ENCODE measurements at regions of chr10 and their contacts with region 1.

Region 1: GRCh38 chr10:3477683-3478082 is 305.1 kb upstream of the PITRM1 start:
- DNase-seq: no peak
- H3K4me3 Mint-ChIP-seq: no peak overlapping the region
- H3K27ac Mint-ChIP-seq: peak overlapping the region; percentile 72
- H3K4me1 Mint-ChIP-seq: peaks cover 26% of the 10 kb centered on the region
- H3K27me3 Mint-ChIP-seq: peaks cover 31% of the 10 kb centered on the region

Region 2: GRCh38 chr10:3424110-3424851 is 53.4 kb before region 1 on chr10:
- intact Hi-C with region 1: loop called (anchors 5 kb)
- DNase-seq: no peak
- H3K4me3 Mint-ChIP-seq: no peak overlapping the region
- H3K27ac Mint-ChIP-seq: no peak overlapping the region
- H3K4me1 Mint-ChIP-seq: peaks cover 46% of the 10 kb centered on the region
- H3K27me3 Mint-ChIP-seq: peaks cover 11% of the 10 kb centered on the region

Region 3: GRCh38 chr10:3467052-3467951 is 10.4 kb before region 1 on chr10:
- intact Hi-C with region 1: loop called (anchors 1 kb)
- DNase-seq: peak; percentile 79
- H3K4me3 Mint-ChIP-seq: peak overlapping the region; percentile 82
- H3K27ac Mint-ChIP-seq: peak overlapping the region; percentile 96
- H3K4me1 Mint-ChIP-seq: peaks cover 51% of the 10 kb centered on the region
- H3K27me3 Mint-ChIP-seq: no peaks in the 10 kb centered on the region